ENCODE measurements at regions of chrX and their contacts with region 1.

Region 1: DNA sequence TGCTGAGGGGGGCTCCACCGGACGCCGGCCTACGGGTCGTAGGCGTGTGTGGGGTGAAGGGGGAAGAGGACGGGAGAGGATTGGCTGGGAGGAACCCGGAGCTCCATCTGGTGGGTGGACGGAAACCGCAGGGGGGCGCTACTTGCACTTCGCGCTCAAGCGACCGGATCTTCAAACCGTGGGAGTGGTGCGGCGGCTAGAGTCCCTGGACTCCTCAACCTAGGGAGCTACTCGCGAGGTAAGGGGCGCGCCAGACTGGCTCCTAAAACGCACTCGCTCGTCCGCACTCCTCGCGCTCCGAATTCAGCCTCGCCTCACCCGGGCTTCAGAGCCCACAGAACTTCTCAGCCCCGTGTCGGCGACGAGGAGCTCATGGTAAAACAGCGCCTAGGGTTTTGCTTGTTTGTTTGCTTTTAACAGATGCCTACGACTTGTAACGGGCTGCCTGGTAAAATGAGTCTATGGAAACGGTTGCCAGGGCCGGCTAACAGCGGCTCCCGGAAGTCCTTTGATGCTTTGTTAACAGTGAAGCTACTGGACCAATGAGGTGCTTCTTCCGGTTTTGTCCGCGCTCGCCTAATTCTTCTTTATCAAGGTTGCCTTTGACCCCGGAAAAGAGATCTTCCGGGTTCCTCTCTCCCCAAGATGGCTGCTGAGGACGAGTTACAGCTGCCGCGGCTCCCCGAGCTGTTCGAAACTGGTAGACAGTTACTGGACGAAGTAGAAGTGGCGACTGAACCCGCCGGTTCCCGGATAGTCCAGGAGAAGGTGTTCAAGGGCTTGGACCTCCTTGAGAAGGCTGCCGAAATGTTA is at the start of gene IGBP1:
- DNase-seq: peak; percentile 71
- H3K4me3 Mint-ChIP-seq: peak within 1 kb of the TSS; percentile 99
- H3K27ac Mint-ChIP-seq: peak within 1 kb of the TSS; percentile 97
- H3K4me1 Mint-ChIP-seq: peaks cover 32% of the 10 kb centered on the region
- H3K27me3 Mint-ChIP-seq: no peaks in the 10 kb centered on the region
- total RNA-seq, gene IGBP1: 29.4 and 29.8 TPM in 2 replicates

Region 2: GRCh38 chrX:68828740-68829552 is 1304.6 kb before region 1 on chrX and contains the start of gene EFNB1:
- intact Hi-C with region 1: loop called (anchors 2 kb)
- DNase-seq: peak; percentile 81
- H3K4me3 Mint-ChIP-seq: peak within 1 kb of the TSS; percentile 93
- H3K27ac Mint-ChIP-seq: peak within 1 kb of the TSS; percentile 69
- H3K4me1 Mint-ChIP-seq: peaks cover 23% of the 10 kb centered on the region
- H3K27me3 Mint-ChIP-seq: peaks cover 16% of the 10 kb centered on the region
- total RNA-seq, gene EFNB1: 7.3 and 8.0 TPM in 2 replicates

Region 3: GRCh38 chrX:69538321-69538876 is 595.1 kb before region 1 on chrX:
- intact Hi-C with region 1: loop called (anchors 1 kb)
- DNase-seq: peak; percentile 62
- H3K4me3 Mint-ChIP-seq: peak overlapping the region; percentile 22
- H3K27ac Mint-ChIP-seq: no peak overlapping the region
- H3K4me1 Mint-ChIP-seq: peaks cover 17% of the 10 kb centered on the region
- H3K27me3 Mint-ChIP-seq: peaks cover 2% of the 10 kb centered on the region

Region 4: GRCh38 chrX:69808375-69808774 is 325.1 kb before region 1 on chrX:
- intact Hi-C with region 1: loop called (anchors 2 kb)
- DNase-seq: no peak
- H3K4me3 Mint-ChIP-seq: no peak overlapping the region
- H3K27ac Mint-ChIP-seq: no peak overlapping the region
- H3K4me1 Mint-ChIP-seq: peaks cover 12% of the 10 kb centered on the region
- H3K27me3 Mint-ChIP-seq: peaks cover 2% of the 10 kb centered on the region

Region 5: DNA sequence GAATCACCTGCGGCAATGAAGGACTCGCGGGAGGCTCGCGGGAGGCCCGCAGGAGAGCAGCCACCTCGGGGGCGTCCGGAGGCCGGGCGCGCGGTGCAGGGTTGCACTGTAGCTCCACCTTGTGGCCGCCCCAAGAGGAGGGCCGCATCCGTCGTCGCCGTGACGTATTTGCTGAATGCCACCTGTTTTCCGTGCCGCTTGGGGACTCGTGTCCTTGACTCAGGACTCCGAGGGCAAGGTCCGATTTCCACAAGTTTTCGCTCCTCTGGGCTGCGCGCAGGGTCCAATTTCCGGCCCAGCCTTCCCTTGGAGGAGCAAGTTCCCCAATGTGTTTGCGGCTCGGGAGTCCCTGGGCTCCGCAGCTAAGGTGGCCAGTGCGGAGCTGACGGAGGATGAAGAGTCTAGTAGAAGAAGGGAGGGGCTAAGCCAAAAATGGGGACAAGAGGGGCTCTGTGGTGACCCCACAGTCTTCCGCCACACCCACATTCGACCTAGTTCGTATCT is 300.4 kb after region 1 on chrX:
- intact Hi-C with region 1: loop called (anchors 1 kb)
- DNase-seq: peak; percentile 64
- H3K4me3 Mint-ChIP-seq: peak overlapping the region; percentile 91
- H3K27ac Mint-ChIP-seq: peak overlapping the region; percentile 93
- H3K4me1 Mint-ChIP-seq: peaks cover 22% of the 10 kb centered on the region
- H3K27me3 Mint-ChIP-seq: peaks cover 11% of the 10 kb centered on the region

Region 6: GRCh38 chrX:70508296-70508911 is 374.9 kb after region 1 on chrX:
- intact Hi-C with region 1: no loop called
- DNase-seq: no peak
- H3K4me3 Mint-ChIP-seq: peak overlapping the region; percentile 20
- H3K27ac Mint-ChIP-seq: peak overlapping the region; percentile 82
- H3K4me1 Mint-ChIP-seq: peaks cover 51% of the 10 kb centered on the region
- H3K27me3 Mint-ChIP-seq: no peaks in the 10 kb centered on the region

Region 7: DNA sequence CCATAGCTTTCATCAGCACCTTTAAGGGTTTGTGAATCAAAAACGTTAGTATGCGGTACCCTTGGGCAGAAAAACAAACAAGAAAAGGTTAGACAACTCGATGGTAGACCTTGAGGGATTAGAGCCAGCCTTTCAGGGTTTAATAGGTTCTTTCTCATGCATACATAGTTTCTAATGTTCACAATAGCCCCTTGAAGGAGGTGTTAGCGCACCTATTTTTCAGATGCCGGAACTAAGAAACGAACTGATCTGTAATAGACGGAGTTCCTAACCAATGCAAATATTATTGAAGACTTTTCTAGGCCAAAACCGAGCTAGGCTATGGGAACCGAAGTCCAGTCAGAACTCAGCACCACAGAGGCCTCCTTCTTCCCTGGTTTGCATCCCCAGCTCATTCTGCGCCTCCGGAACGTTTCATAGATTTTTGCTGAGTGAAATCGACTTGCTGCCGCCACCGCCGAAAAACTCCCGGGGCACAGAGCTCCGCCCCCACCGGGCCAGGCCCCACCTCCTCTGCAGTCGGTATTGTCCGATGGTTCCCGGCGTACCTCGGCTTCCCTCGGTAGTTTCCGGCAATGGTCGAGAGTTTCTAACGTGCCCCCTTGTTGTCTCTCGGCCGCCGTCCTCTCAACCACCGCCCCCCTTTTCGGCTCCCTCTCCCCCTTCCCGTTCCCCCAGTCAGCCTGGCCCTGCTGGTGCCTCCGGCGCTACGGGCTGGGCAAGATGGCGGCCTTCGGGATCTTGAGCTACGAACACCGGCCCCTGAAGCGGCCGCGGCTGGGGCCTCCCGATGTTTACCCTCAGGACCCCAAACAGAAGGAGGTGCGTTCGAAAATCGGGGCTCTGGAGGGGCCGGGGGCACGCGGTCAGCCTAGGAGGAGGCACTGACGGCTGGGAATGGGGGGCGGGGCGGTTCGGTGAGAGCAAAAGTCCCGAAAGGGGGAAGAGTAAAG is 984.8 kb after region 1 on chrX and contains the start of gene MED12:
- intact Hi-C with region 1: loop called (anchors 10 kb)
- DNase-seq: peak; percentile 76
- H3K4me3 Mint-ChIP-seq: peak within 1 kb of the TSS; percentile 85
- H3K27ac Mint-ChIP-seq: peak within 1 kb of the TSS; percentile 82
- H3K4me1 Mint-ChIP-seq: peaks cover 20% of the 10 kb centered on the region
- H3K27me3 Mint-ChIP-seq: no peaks in the 10 kb centered on the region
- total RNA-seq, gene MED12: 59.9 and 65.4 TPM in 2 replicates